ENCODE measurements at regions of chr18 and their contacts with region 1.

Region 1: DNA sequence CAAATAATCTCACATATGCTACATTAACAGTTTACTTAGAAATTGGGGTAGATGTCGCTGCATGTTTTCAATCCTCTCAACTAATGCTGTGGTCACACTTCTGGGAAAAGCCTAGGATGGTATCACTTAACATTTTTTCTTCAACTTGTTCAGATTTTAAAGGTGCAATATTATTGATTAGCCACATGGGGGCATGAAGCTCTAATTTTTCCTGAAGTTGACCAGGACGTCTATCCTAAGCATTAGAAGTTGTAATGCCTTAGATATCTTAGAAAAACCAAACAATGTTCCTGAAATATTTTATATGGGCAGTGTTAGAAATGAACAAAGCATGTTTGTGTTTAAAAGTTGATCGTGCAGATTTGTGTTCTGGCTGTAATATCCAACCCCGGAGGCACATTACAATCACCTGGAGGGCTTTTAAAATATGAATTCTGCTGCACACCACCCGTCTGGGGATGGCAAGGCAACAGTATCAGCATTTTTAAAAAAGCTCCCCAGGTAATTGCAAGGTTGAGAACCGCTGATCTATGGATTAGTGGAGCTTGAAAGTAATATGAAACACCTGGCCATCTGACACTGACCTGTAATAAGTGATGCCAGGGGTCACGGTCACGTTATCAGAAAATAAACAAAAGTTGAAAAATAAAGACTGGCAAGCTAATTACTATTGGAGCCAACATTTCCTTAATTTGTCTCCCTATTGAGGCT is 100.5 kb upstream of the LMAN1 start:
- DNase-seq: peak; percentile 17 to 30
- ATAC-seq: peak; percentile 40 to 60; a peak in 3 of 6 replicates
- H3K4me3 ChIP-seq: no peak overlapping the region
- H3K27ac ChIP-seq: no peak overlapping the region
- H3K4me1 ChIP-seq: no peaks in the 10 kb centered on the region
- CTCF ChIP-seq: peak; percentile 56
- EP300 ChIP-seq: no peak
- POLR2A ChIP-seq: no peak
- RAD21 ChIP-seq: peak; percentile 65 to 69

Region 2: DNA sequence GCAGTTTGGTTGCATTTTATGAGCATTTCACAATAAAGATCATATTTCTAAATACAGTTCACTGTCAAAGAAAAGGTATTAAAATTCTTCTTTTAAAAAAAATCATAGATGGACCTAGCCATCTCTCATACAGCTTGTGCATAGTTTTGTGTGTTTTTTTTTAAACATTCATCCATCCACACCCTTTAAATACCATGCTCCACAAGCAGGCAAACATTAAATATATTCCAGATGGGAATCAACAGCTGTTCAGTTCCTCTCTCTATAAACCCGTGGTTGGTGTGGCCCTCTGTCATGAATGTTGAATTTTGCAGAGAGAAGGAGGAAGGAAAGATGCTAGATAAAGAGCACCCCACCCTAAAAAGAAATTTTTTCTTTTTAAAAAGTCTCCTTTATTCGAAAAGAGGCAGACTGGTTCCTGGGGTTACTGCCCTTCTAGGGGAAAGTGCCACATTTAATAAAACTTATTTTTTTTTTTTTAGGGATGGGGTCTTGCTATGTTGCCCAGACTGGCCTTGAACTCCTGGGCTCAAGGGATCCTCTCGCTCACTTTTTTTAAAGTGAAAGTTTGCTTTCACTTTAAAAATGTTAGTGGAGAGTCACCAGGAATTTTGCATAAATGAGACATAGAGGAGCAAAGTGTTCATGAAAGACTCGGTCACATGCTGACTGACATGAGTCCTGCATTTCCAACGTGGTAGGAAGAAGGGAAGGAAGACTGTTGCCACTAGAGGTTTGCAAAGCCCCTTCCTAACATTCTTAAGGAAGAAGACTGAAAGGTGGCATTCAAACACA is 26.5 kb before region 1 on chr18:
- CTCF ChIA-PET with region 1: no interaction called
- POLR2A ChIA-PET with region 1: no interaction called
- DNase-seq: no peak
- ATAC-seq: no peak
- H3K4me3 ChIP-seq: no peak overlapping the region
- H3K27ac ChIP-seq: no peak overlapping the region
- H3K4me1 ChIP-seq: no peaks in the 10 kb centered on the region
- CTCF ChIP-seq: no peak
- EP300 ChIP-seq: no peak
- POLR2A ChIP-seq: no peak
- RAD21 ChIP-seq: no peak

Region 3: DNA sequence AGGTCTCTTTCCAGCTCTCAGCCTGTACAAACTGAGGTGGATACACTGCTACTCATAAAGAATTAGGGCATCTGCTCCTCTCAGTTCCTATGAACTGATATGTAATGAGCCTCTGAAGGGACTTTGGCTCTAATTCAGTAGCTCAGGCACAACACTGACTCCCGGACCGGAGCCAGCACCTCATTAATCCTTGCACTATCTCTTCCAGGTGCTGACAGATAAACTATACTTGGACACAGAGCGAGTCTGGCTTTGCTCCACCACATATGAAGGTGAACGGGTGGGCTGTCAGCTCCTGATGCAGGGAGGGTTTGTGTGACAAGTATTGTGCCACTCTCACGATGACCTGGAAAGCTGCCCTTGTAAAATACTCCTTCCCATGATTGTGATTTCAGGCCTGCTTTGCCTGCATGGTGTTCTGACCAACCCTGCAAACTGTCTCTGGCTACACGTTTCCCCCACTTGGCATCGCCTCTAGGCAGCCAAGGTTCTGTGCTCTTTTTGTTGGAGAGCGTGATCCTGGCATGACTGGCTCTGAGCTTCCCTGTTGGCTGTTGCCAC is 11.1 kb after region 1 on chr18:
- CTCF ChIA-PET with region 1: interaction called, 22 read pairs
- POLR2A ChIA-PET with region 1: no interaction called
- DNase-seq: no peak
- ATAC-seq: no peak
- H3K4me3 ChIP-seq: no peak overlapping the region
- H3K27ac ChIP-seq: no peak overlapping the region
- H3K4me1 ChIP-seq: no peaks in the 10 kb centered on the region
- CTCF ChIP-seq: no peak
- EP300 ChIP-seq: no peak
- POLR2A ChIP-seq: no peak
- RAD21 ChIP-seq: no peak

Region 4: GRCh38 chr18:59485382-59485781 is 25.9 kb after region 1 on chr18:
- CTCF ChIA-PET with region 1: interaction called, 11 read pairs
- POLR2A ChIA-PET with region 1: no interaction called
- DNase-seq: no peak
- ATAC-seq: no peak
- H3K4me3 ChIP-seq: no peak overlapping the region
- H3K27ac ChIP-seq: no peak overlapping the region
- H3K4me1 ChIP-seq: no peaks in the 10 kb centered on the region
- CTCF ChIP-seq: no peak
- EP300 ChIP-seq: no peak
- POLR2A ChIP-seq: no peak
- RAD21 ChIP-seq: no peak

Region 5: GRCh38 chr18:59631583-59632181 is 172.2 kb after region 1 on chr18:
- CTCF ChIA-PET with region 1: interaction called, 22 read pairs
- POLR2A ChIA-PET with region 1: no interaction called
- DNase-seq: peak; percentile 6 to 20
- ATAC-seq: peak in 1 of 2 experiments; percentile 41; a peak in 2 of 6 replicates
- H3K4me3 ChIP-seq: no peak overlapping the region
- H3K27ac ChIP-seq: no peak overlapping the region
- H3K4me1 ChIP-seq: no peaks in the 10 kb centered on the region
- CTCF ChIP-seq: peak; percentile 51
- EP300 ChIP-seq: no peak
- POLR2A ChIP-seq: no peak
- RAD21 ChIP-seq: peak; percentile 62 to 67